Activated CD4-positive, alpha-beta memory T cell treated with anti-CD3 and anti-CD28 coated beads for 36 hours (primary cell): ENCODE measurements at regions of chr9 and their contacts with region 1.

Region 1: GRCh38 chr9:114988962-114989599 is 58.7 kb upstream of the TNFSF8 start:
- DNase-seq: peak; percentile 75
- H3K4me3 Mint-ChIP-seq: peak overlapping the region; percentile 5
- H3K27ac Mint-ChIP-seq: peak overlapping the region; percentile 94
- H3K4me1 Mint-ChIP-seq: peaks cover 65% of the 10 kb centered on the region
- H3K27me3 Mint-ChIP-seq: no peaks in the 10 kb centered on the region

Region 2: DNA sequence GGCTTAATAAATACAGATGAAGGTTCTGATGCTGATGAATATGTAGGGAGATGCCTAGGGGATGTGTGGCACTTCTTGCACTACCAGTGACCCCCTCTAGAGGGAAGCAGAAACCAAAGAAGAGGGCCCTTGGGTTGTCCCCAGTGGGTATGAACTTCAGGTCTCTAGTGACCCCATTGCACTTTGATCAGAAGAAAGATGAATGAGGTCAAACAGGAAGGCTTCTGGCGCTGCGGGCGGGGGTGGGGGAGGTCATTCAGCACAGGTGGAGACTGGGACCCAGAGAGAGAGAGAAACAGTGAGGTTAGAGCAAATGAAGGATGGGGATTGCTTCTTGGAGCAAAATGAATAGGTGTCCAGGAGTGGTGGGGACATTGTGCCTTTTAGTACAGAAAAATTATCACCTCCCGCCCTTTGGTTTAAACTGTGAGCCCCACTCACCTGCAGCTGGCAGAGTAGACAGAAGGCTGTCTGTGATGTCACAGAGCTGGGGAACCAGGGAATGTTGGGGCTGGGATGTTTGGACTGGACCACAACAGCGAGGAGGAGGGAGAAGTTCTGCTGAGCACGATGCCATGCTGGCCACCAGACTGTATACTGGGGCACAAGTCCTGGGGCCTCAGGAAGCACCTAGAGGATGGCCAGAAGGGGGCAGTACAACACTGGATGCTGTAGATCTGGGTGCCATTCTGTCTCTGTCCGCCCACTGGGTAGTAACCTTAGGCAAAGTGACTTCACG is 307.3 kb before region 1 on chr9 and contains the start of gene TEX48:
- CTCF ChIA-PET with region 1: interaction called, 14 read pairs
- POLR2A ChIA-PET with region 1: no interaction called
- intact Hi-C with region 1: no loop called
- DNase-seq: peak; percentile 90
- H3K4me3 Mint-ChIP-seq: peak within 1 kb of the TSS; percentile 40
- H3K27ac Mint-ChIP-seq: peak within 1 kb of the TSS; percentile 76
- H3K4me1 Mint-ChIP-seq: peaks cover 50% of the 10 kb centered on the region
- H3K27me3 Mint-ChIP-seq: peaks cover 6% of the 10 kb centered on the region
- total RNA-seq, gene TEX48: 0.57 to 1.2 TPM

Region 3: GRCh38 chr9:114718801-114719221 is 270.3 kb before region 1 on chr9:
- CTCF ChIA-PET with region 1: no interaction called
- POLR2A ChIA-PET with region 1: no interaction called
- intact Hi-C with region 1: loop called (anchors 1 kb)
- DNase-seq: peak; percentile 97
- H3K4me3 Mint-ChIP-seq: peak overlapping the region; percentile 17
- H3K27ac Mint-ChIP-seq: peak overlapping the region; percentile 80
- H3K4me1 Mint-ChIP-seq: peaks cover 63% of the 10 kb centered on the region
- H3K27me3 Mint-ChIP-seq: no peaks in the 10 kb centered on the region

Region 4: GRCh38 chr9:114919611-114920010 is 69.5 kb before region 1 on chr9:
- CTCF ChIA-PET with region 1: interaction called, 3 read pairs
- POLR2A ChIA-PET with region 1: interaction called, 11 read pairs
- intact Hi-C with region 1: no loop called
- DNase-seq: peak; percentile 68
- H3K4me3 Mint-ChIP-seq: peak overlapping the region; percentile 10
- H3K27ac Mint-ChIP-seq: peak overlapping the region; percentile 76
- H3K4me1 Mint-ChIP-seq: peaks cover 93% of the 10 kb centered on the region
- H3K27me3 Mint-ChIP-seq: no peaks in the 10 kb centered on the region

Region 5: GRCh38 chr9:114960276-114960675 is 28.8 kb before region 1 on chr9:
- CTCF ChIA-PET with region 1: no interaction called
- POLR2A ChIA-PET with region 1: interaction called, 11 read pairs
- intact Hi-C with region 1: loop called (anchors 1 kb)
- DNase-seq: peak; percentile 13
- H3K4me3 Mint-ChIP-seq: no peak overlapping the region
- H3K27ac Mint-ChIP-seq: peak overlapping the region; percentile 98
- H3K4me1 Mint-ChIP-seq: peaks cover 46% of the 10 kb centered on the region
- H3K27me3 Mint-ChIP-seq: no peaks in the 10 kb centered on the region

Region 6: DNA sequence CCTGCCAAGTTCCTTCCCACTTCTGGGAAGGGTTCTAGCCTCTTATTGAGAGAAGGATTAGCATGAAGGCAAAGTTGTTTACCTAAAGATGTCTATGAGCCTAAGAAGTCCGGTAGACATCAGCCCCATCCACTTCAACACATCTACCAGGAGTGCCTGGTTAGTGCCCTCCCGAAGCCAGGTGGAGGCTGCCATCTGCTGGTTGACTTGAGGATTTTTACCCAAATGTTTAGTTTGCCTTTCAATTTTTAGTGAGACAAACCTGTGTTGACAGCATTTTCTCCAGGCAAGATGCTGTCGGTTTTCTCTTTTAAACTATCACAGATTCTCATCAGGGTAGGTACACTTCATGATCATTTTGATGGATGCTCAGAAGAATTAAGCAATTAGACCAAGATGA is 24.9 kb after region 1 on chr9:
- CTCF ChIA-PET with region 1: interaction called, 11 read pairs
- POLR2A ChIA-PET with region 1: interaction called, 71 read pairs
- intact Hi-C with region 1: no loop called
- DNase-seq: peak; percentile 88
- H3K4me3 Mint-ChIP-seq: no peak overlapping the region
- H3K27ac Mint-ChIP-seq: peak overlapping the region; percentile 34
- H3K4me1 Mint-ChIP-seq: peaks cover 47% of the 10 kb centered on the region
- H3K27me3 Mint-ChIP-seq: peaks cover 2% of the 10 kb centered on the region